Activated CD4-positive, alpha-beta T cell treated with anti-CD3 and anti-CD28 coated beads, Interleukin-2, amount 10 ng/mL, durations not matched to agents 24 days and 14 days (primary cell): ENCODE measurements at regions of chr6 and their contacts with region 1.

Region 1: DNA sequence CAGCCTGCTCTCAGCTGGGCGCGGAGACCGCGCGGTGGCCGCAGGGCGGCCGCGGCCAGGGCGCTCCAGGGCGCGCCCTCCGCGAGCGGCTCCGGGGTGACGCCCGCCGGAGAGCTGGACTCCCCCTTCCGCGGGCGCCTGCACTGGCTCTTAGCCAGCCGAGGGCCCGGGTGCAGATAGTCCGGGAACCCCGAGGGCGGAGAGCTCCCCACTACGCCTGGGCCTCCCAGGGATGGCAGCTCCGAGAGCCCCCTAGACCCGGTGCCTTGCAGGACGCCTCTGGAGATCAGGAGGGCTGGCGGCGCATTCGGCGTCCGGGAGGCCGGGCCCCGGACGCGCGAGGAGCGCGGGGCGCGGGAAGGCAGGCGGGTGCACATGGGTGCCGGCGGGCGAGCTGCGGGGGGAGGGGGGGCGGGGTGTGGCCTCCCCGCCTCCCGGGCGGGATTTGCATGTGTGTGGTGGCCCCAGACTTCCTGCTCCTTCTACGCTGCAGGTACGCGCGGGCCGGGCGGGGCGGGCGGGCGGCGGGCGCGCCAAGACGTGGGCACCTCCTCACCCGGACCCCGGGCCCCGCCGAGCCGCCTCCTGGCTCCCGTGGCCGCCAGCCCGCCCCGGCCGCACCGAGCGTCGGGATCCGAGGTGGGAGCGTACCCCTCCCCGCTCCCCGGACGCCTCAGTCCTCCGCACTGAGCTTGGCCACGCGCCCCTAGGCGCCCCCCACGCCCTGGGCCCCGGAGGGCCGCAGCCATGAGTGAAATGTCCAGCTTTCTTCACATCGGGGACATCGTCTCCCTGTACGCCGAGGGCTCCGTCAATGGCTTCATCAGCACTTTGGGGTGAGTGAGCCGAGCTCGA is at the start of gene ITPR3:
- DNase-seq: peak; percentile 92
- H3K4me3 Mint-ChIP-seq: peak within 1 kb of the TSS; percentile 96
- H3K27ac Mint-ChIP-seq: peak within 1 kb of the TSS; percentile 91
- H3K4me1 Mint-ChIP-seq: peaks cover 48% of the 10 kb centered on the region
- H3K27me3 Mint-ChIP-seq: no peaks in the 10 kb centered on the region
- total RNA-seq, gene ITPR3: 45.5 and 45.6 TPM in 2 replicates

Region 2: GRCh38 chr6:33391278-33391921 is 229.7 kb before region 1 on chr6 and contains the start of gene KIFC1:
- intact Hi-C with region 1: loop called (anchors 1 kb)
- DNase-seq: peak; percentile 100
- H3K4me3 Mint-ChIP-seq: peak within 1 kb of the TSS; percentile 89
- H3K27ac Mint-ChIP-seq: peak within 1 kb of the TSS; percentile 97
- H3K4me1 Mint-ChIP-seq: peaks cover 42% of the 10 kb centered on the region
- H3K27me3 Mint-ChIP-seq: peaks cover 2% of the 10 kb centered on the region
- total RNA-seq, gene KIFC1: 64.9 and 66.5 TPM in 2 replicates

Region 3: DNA sequence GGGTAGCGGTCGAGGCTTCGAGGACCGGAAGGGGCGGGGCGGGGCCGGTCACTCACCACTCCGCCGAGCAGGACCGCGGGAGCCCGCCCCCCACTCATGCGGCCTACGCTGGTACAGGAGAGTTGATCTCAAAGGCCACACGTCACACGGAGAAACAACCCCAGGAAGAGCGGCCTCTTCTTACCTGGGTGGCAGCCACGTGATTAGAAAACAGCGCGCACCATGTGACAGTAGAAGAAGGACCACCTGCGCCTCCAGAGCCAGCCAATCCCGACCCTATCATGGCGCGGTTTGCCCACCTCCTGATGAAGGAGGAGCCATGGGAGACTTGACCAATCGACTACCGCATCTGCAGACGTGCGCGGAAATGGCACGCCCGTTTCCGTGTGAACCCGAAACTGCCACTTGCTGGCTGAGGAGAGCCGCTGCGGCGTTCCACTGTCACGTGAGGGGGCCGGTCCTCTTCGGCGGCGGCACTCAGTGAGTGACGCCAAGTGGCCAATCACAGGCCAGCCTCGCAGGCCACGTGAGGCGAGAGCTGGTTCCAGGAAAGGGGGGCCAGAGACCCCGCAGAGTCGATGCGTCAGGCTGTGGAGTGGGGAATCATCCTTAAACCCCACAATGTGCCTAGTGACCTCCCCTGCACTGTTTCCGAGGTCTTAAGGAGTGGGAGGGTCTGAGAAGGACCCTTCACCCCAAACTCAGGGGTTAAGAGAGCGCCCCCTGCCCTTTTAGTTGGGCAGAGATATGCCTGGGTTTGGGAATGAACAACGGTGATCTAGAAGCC is 203.0 kb before region 1 on chr6 and contains the start of gene CUTA:
- intact Hi-C with region 1: loop called (anchors 2 kb)
- DNase-seq: peak; percentile 100
- H3K4me3 Mint-ChIP-seq: peak within 1 kb of the TSS; percentile 92
- H3K27ac Mint-ChIP-seq: peak within 1 kb of the TSS; percentile 96
- H3K4me1 Mint-ChIP-seq: peaks cover 63% of the 10 kb centered on the region
- H3K27me3 Mint-ChIP-seq: peaks cover 1% of the 10 kb centered on the region
- total RNA-seq, gene CUTA: 120 and 124 TPM in 2 replicates

Region 4: GRCh38 chr6:33579828-33580714 is 41.0 kb before region 1 on chr6 and contains the start of gene BAK1:
- intact Hi-C with region 1: loop called (anchors 1 kb)
- DNase-seq: peak; percentile 95
- H3K4me3 Mint-ChIP-seq: peak within 1 kb of the TSS; percentile 94
- H3K27ac Mint-ChIP-seq: peak within 1 kb of the TSS; percentile 92
- H3K4me1 Mint-ChIP-seq: peaks cover 37% of the 10 kb centered on the region
- H3K27me3 Mint-ChIP-seq: no peaks in the 10 kb centered on the region
- total RNA-seq, gene BAK1: 54.7 and 55.9 TPM in 2 replicates

Region 5: GRCh38 chr6:33585403-33586107 is 35.5 kb before region 1 on chr6:
- intact Hi-C with region 1: loop called (anchors 1 kb)
- DNase-seq: peak; percentile 97
- H3K4me3 Mint-ChIP-seq: peak overlapping the region; percentile 82
- H3K27ac Mint-ChIP-seq: peak overlapping the region; percentile 94
- H3K4me1 Mint-ChIP-seq: peaks cover 25% of the 10 kb centered on the region
- H3K27me3 Mint-ChIP-seq: no peaks in the 10 kb centered on the region